Endothelial cell of umbilical vein (primary cell): ENCODE measurements at regions of chr22 and their contacts with region 1.

Region 1: GRCh38 chr22:37817705-37818408 is 5.3 kb upstream of the GALR3 start:
- DNase-seq: peak; percentile 86
- H3K4me3 ChIP-seq: peak overlapping the region in 1 of 3 experiments; percentile 5
- H3K27ac ChIP-seq: no peak overlapping the region
- H3K4me1 ChIP-seq: peaks cover 9% of the 10 kb centered on the region
- H3K27me3 ChIP-seq: peaks cover 2 to 3% of the 10 kb centered on the region in 2 experiments
- CTCF ChIP-seq: peak; percentile 95 to 98
- POLR2A ChIP-seq: no peak

Region 2: GRCh38 chr22:37533995-37534394 is 283.9 kb before region 1 on chr22:
- CTCF ChIA-PET with region 1: no interaction called
- POLR2A ChIA-PET with region 1: no interaction called
- dilution Hi-C with region 1: no loop called
- intact Hi-C with region 1: no loop called
- DNase-seq: no peak
- H3K4me3 ChIP-seq: no peak overlapping the region
- H3K27ac ChIP-seq: no peak overlapping the region
- H3K4me1 ChIP-seq: peaks cover 3% of the 10 kb centered on the region
- H3K27me3 ChIP-seq: no peaks in the 10 kb centered on the region
- CTCF ChIP-seq: no peak
- POLR2A ChIP-seq: no peak

Region 3: GRCh38 chr22:37734964-37735451 is 82.8 kb before region 1 on chr22:
- CTCF ChIA-PET with region 1: no interaction called
- POLR2A ChIA-PET with region 1: no interaction called
- dilution Hi-C with region 1: no loop called
- intact Hi-C with region 1: no loop called
- DNase-seq: no peak
- H3K4me3 ChIP-seq: no peak overlapping the region
- H3K27ac ChIP-seq: no peak overlapping the region
- H3K4me1 ChIP-seq: no peaks in the 10 kb centered on the region
- H3K27me3 ChIP-seq: no peaks in the 10 kb centered on the region
- CTCF ChIP-seq: peak; percentile 24 to 57
- POLR2A ChIP-seq: no peak

Region 4: DNA sequence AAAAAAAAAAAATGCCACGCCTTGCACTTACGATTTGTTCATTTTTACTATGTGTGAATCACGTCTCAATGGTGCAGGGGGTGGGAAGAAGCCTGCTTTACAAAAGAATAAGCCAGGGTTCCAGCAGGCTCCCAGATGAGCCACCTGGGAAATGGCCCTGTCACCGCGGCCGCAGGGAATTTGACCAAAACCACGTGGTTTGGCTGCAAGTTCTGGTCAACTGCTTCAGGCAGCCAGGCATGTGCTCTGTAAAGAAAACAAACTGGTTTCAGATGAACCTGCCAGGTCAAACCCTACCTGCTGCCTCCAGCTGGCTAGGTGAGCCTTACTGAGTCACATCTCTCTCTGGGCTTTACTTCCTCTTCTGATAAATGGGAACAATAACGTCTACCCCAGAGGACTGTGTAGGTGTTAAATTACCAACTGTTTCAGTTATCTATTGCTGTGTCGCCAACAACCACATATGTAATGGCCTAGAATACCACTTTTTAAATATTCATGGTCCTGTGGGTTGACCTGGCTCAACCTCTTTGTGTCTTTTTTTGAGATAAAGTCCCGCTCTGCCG is 40.7 kb before region 1 on chr22:
- CTCF ChIA-PET with region 1: no interaction called
- POLR2A ChIA-PET with region 1: no interaction called
- dilution Hi-C with region 1: no loop called
- intact Hi-C with region 1: no loop called
- DNase-seq: no peak
- H3K4me3 ChIP-seq: no peak overlapping the region
- H3K27ac ChIP-seq: no peak overlapping the region
- H3K4me1 ChIP-seq: peaks cover 10% of the 10 kb centered on the region
- H3K27me3 ChIP-seq: no peaks in the 10 kb centered on the region
- CTCF ChIP-seq: no peak
- POLR2A ChIP-seq: peak; percentile 52

Region 5: DNA sequence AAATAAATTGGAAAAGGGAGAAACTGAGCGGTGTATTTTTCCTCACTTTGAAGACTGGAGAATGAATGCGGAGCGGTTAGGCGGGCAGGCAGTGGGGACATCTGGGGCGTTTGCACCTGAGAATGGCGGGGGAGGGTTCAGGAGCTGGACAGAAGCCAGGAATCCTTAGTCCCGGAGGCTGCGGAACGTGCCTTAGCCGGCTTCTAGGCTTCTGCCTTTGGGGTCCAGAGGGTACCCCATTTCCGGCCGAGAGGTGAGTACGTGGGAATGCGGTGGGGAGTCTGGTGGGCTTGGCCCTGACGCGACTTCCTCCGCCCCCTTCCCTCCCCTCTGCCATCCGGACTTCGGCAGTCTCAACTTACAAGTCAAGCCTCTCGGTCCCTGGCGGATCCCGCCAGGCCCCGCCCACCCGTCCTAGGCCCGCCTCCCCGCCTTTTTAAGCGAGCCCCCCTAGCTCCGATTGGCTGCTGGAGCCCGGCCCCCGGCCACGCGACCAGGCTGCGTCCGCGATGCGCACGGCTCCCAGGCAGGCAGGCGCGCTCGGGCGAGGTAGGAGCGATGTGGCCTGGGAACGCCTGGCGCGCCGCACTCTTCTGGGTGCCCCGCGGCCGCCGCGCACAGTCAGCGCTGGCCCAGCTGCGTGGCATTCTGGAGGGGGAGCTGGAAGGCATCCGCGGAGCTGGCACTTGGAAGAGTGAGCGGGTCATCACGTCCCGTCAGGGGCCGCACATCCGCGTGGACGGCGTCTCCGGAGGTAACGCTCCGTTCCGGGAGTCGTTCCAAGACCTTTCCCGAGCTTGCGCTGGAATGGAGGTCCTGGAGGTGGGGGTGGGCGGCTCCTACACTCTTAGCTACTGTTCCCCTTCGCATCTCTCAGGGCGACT is 10.2 kb before region 1 on chr22 and contains the start of gene GCAT:
- CTCF ChIA-PET with region 1: interaction called, 35 read pairs
- POLR2A ChIA-PET with region 1: interaction called, 5 read pairs
- dilution Hi-C with region 1: no loop called
- intact Hi-C with region 1: no loop called
- DNase-seq: peak; percentile 98
- H3K4me3 ChIP-seq: peak within 1 kb of the TSS; percentile 64 to 79 (median 66)
- H3K27ac ChIP-seq: peak within 1 kb of the TSS; percentile 30
- H3K4me1 ChIP-seq: peaks cover 31% of the 10 kb centered on the region
- H3K27me3 ChIP-seq: no peaks in the 10 kb centered on the region
- CTCF ChIP-seq: no peak
- POLR2A ChIP-seq: peak; percentile 80
- total RNA-seq, gene GCAT: 19.7 and 19.9 TPM in 2 replicates

Region 6: DNA sequence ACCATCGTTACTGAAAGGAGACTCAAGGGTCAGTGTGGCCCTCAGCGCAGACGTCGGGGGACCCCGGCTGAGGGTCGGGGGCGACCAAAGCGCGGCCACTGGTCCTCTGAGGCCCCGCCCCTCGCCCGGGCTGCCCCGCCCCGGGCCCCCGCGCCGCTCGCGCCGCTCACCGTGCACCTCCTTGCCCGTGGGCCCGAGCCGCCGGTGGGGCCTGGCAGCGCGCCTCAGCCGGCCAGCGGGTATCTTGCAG is 25.8 kb after region 1 on chr22:
- CTCF ChIA-PET with region 1: interaction called, 11 read pairs
- POLR2A ChIA-PET with region 1: interaction called, 3 read pairs
- dilution Hi-C with region 1: no loop called
- intact Hi-C with region 1: no loop called
- DNase-seq: no peak
- H3K4me3 ChIP-seq: peak overlapping the region; percentile 52 to 91 (median 68)
- H3K27ac ChIP-seq: peak overlapping the region; percentile 19
- H3K4me1 ChIP-seq: peaks cover 12% of the 10 kb centered on the region
- H3K27me3 ChIP-seq: no peaks in the 10 kb centered on the region
- CTCF ChIP-seq: no peak
- POLR2A ChIP-seq: no peak

Region 7: DNA sequence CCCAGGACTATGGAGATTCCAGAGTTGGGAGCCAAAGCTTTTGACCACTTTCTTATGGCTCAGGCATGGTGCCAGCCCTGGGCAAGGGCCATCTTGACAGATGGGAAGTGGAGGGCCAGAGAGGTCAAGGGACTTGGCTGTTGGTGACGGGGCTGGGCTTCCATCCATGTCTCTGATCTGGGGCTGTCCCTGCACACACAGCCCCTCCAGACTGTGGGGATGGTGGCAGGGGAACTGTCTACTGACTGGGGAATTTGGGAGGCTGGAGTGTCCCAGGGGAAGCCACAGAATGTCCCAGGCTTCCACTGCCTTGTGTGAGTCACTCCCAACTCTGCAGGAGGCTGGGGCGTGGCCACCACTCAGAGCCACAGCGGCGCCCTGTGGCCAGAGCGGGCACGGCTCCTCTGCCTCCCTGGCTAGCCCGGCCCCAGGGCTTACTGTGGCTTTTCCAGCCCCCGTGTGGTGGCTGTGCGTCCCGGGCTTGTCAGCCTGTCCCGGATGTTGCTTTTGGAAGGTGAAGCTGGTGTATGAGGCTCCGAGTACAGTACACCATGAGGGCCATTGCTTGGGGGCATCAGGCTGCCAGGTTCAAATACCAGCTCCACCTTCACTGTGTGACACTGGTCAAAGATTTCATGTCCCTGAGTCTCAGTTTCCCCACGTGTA is 116.0 kb after region 1 on chr22:
- CTCF ChIA-PET with region 1: interaction called, 17 read pairs
- POLR2A ChIA-PET with region 1: no interaction called
- dilution Hi-C with region 1: no loop called
- intact Hi-C with region 1: loop called (anchors 1 kb)
- DNase-seq: peak; percentile 95
- H3K4me3 ChIP-seq: no peak overlapping the region
- H3K27ac ChIP-seq: peak overlapping the region; percentile 30
- H3K4me1 ChIP-seq: peaks cover 29% of the 10 kb centered on the region
- H3K27me3 ChIP-seq: no peaks in the 10 kb centered on the region
- CTCF ChIP-seq: peak; percentile 99 to 100
- POLR2A ChIP-seq: peak; percentile 27

Region 8: GRCh38 chr22:37965940-37966664 is 148.2 kb after region 1 on chr22:
- CTCF ChIA-PET with region 1: interaction called, 42 read pairs
- POLR2A ChIA-PET with region 1: interaction called, 6 read pairs
- dilution Hi-C with region 1: no loop called
- intact Hi-C with region 1: loop called (anchors 1 kb)
- DNase-seq: no peak
- H3K4me3 ChIP-seq: no peak overlapping the region
- H3K27ac ChIP-seq: no peak overlapping the region
- H3K4me1 ChIP-seq: no peaks in the 10 kb centered on the region
- H3K27me3 ChIP-seq: no peaks in the 10 kb centered on the region
- CTCF ChIP-seq: no peak
- POLR2A ChIP-seq: no peak